ENCODE measurements at regions of chr6 and their contacts with region 1.

Region 1: DNA sequence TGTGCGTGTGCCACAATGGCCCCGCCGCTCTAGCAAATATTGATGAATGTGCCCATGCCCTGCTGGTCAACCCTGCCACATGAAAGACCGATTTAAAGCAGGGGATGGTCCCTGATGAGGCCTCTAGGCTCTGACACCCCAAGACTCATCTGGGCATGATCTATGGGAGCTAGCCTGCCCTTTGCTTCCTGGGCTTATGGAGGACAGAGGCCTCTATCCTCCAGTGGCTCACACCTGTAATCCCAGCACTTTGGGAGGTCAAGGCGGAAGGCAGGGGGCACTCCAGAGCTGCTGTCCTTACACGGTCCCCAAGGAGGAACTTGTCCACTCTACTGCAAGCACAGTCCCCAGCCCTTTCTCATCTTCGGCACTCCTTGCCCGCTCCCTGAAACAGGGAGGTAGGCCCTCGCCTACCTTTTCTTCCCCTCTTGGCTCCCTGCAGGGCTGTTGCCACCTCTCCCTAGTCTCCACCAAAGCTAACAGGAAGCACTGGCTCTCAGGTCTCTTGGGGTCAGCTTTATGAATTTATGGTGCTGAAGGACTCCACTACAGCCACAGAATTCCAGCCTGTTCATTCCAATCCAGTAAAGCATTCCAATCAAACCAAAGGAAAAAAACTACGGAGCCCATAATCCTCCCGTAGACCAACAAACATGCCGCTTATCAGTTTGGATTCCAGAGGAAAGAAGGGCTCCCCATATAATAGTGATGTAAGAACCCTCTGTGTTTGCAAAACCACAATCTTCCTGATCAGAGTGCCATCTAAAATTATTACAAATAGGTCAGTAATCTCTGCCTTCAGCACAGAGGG is 48.7 kb upstream of the FOXQ1 start:
- DNase-seq: peak; percentile 99
- ATAC-seq: peak; percentile 57
- H3K4me3 ChIP-seq: peak overlapping the region; percentile 14 to 53 (median 14); a peak in 5 of 6 replicates
- H3K27ac ChIP-seq: peak overlapping the region; percentile 95
- H3K4me1 ChIP-seq: peaks cover 67% of the 10 kb centered on the region
- H3K27me3 ChIP-seq: no peaks in the 10 kb centered on the region
- CTCF ChIP-seq: peak; percentile 86
- EP300 ChIP-seq: peak in 1 of 2 experiments; percentile 91; a peak in 3 of 4 replicates
- POLR2A ChIP-seq: peak in 1 of 2 experiments; percentile 43; a peak in 2 of 4 replicates
- RAD21 ChIP-seq: peak; percentile 87

Region 2: DNA sequence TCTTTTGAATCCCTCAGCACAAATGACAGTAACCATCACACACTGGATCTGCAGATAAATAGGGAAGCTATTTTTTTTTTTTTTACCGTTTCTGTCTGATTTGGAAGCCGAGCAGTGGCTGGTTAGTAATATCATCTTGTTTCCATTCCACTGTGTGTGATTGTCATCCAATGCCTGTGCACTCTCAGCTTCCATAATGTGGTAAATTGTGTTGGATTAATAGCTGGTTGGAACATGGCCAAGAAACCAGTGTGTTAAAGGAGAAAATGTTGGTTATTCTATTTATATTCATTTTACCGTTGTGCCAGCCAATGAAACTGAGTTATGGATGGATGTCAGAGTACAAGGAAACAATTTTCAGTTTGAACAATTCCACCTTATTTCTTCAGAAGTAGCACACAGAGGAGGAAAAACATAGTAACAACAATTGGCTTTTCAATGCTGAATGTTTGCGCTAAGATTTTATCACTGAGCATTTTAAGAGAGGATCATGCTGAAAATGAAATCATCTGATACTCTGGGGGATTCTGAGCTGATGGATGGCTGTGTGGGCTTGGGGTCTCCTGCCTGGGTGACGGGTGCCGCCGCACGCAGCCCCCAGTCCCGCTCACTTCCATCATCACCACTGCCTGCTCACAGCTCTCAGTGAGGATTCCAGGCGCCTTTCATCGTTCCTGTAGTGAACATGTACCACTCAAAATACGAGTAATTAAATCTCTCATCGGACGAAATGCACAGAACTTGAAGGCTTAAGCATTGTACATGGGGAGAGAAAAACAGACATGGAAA is 529.6 kb before region 1 on chr6:
- CTCF ChIA-PET with region 1: no interaction called
- POLR2A ChIA-PET with region 1: no interaction called
- in situ Hi-C with region 1: no loop called
- intact Hi-C with region 1: no loop called
- DNase-seq: no peak
- ATAC-seq: no peak
- H3K4me3 ChIP-seq: no peak overlapping the region
- H3K27ac ChIP-seq: no peak overlapping the region
- H3K4me1 ChIP-seq: no peaks in the 10 kb centered on the region
- H3K27me3 ChIP-seq: peaks cover 5 to 55% of the 10 kb centered on the region in 2 experiments; a peak in 4 of 5 replicates
- CTCF ChIP-seq: no peak
- EP300 ChIP-seq: no peak
- POLR2A ChIP-seq: no peak
- RAD21 ChIP-seq: no peak

Region 3: DNA sequence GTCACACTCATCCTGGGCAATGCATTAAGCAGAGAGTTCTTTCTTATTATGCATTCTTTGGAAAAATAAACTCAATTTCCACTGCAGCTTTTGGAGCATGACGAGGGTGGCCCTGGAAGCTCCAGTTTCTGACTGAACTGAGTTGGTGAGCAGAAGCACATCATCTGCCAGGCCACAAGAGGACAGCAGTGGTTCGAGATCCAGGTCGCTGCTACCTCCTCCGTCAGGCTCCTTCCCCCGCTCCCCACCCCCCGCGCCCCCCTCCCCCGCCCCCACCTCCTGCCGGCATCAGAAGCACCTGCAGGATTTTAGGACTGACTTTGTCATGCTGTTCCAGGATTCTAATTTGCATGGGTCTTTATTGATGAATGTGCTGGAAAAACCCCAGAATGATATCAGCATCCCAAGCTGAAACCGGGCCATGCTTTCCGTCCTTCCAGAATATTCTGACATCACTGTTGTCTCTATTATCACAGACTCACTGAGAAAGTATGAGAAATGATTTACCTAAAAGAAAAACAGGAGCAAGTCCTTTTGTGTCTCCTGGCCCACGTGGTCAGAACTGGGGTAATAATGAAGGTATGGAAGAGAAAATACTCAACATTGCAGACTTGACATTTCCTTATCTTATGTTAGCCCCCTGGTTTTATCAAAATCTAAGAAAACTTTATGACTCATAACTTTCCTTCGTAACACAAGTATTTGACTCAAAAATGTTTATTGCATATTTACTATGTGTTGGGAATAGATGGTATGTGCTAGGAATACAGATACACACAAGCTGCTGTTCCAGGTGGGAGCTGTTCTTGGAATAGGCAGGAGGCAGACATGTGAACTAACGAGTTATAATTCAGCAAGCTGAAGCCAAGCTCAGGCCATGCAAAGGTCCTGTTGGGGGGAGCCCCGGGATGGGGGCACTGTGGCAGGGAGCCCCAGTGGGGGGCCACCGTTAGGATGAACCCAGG is 350.1 kb before region 1 on chr6:
- CTCF ChIA-PET with region 1: no interaction called
- POLR2A ChIA-PET with region 1: interaction called, 16 read pairs
- in situ Hi-C with region 1: loop called (anchors 5 kb)
- intact Hi-C with region 1: loop called (anchors 1 kb)
- DNase-seq: peak; percentile 56
- ATAC-seq: peak; percentile 91
- H3K4me3 ChIP-seq: no peak overlapping the region
- H3K27ac ChIP-seq: no peak overlapping the region
- H3K4me1 ChIP-seq: peaks cover 16% of the 10 kb centered on the region
- H3K27me3 ChIP-seq: peaks cover 2 to 15% of the 10 kb centered on the region in 2 experiments; a peak in 1 of 5 replicates
- CTCF ChIP-seq: peak; percentile 84
- EP300 ChIP-seq: no peak
- POLR2A ChIP-seq: no peak
- RAD21 ChIP-seq: peak; percentile 85

Region 4: DNA sequence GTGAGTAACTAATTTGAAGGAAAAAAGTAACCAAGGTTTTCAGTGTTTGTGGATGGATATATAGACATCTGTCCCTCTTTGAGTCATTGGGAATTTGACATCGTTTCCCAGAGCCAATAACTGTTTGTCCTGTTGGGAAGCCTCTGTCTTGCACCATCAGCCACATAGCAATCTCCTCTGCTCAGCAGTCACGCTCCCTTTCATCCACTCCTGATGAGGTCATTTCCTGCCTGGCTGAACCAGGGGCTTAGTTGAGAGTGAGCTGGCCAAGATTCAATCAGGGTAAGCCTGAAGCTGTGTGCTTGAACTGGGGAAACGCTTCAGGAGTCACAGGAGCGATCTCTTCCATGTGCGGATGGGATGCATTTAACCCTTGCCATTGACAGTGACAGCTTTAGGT is 72.9 kb before region 1 on chr6:
- CTCF ChIA-PET with region 1: no interaction called
- POLR2A ChIA-PET with region 1: interaction called, 22 read pairs
- in situ Hi-C with region 1: no loop called
- intact Hi-C with region 1: loop called (anchors 2 kb)
- DNase-seq: peak; percentile 79
- ATAC-seq: peak; percentile 28; the same call in 2 of the 3 replicates
- H3K4me3 ChIP-seq: no peak overlapping the region
- H3K27ac ChIP-seq: no peak overlapping the region
- H3K4me1 ChIP-seq: peaks cover 27% of the 10 kb centered on the region
- H3K27me3 ChIP-seq: no peaks in the 10 kb centered on the region
- CTCF ChIP-seq: no peak
- EP300 ChIP-seq: no peak
- POLR2A ChIP-seq: no peak
- RAD21 ChIP-seq: no peak

Region 5: DNA sequence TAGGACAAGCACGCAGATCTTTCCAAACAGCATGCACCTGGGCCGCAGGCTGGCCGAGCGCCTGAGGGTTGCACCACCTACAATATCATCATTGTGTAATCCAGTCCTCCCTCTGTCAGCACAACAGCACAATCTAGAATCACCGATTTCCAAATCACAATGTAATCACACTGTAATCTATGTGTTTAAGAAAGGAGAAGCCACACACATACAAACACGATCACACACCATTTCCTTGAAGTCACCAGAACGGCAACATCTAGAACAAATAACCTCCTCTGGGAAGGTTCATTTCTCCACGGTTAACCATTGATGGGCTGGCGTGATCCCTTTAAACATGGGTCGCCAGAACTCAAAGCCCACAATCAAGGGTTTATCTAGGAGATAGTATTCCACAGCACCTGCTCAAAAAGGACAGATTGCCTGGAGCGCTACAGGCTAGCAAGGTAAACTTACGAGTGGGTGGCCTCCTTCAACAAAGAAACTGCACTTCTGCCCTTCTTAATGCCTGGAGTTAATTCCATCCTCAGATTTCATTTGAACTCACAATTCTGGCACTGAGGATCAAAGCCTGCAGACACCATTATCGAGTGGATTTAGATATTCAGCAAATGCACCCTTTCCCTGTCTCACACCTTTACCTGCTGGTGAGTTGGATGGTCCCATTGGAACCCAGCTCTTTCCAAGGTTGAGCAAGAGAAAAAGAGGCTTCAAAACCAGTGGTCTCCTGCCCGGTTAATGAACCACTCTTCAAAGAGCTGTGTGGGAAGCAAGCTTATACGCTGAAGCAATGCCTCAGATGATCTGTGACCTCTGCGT is 35.1 kb before region 1 on chr6:
- CTCF ChIA-PET with region 1: no interaction called
- POLR2A ChIA-PET with region 1: interaction called, 431 read pairs
- in situ Hi-C with region 1: loop called (anchors 5 kb)
- intact Hi-C with region 1: loop called (anchors 1 kb)
- DNase-seq: peak; percentile 99
- ATAC-seq: peak; percentile 89
- H3K4me3 ChIP-seq: peak overlapping the region; percentile 54 to 68 (median 59)
- H3K27ac ChIP-seq: peak overlapping the region; percentile 96
- H3K4me1 ChIP-seq: peaks cover 97% of the 10 kb centered on the region
- H3K27me3 ChIP-seq: no peaks in the 10 kb centered on the region; a peak in 1 of 5 replicates
- CTCF ChIP-seq: 0 out of 2 replicates have a peak, but pooled peaks have one; percentile 3
- EP300 ChIP-seq: peak; percentile 85 to 98
- POLR2A ChIP-seq: peak; percentile 51 to 66; a peak in 3 of 4 replicates
- RAD21 ChIP-seq: peak; percentile 48

Region 6: GRCh38 chr6:1297746-1298145 is 34.5 kb after region 1 on chr6:
- CTCF ChIA-PET with region 1: no interaction called
- POLR2A ChIA-PET with region 1: interaction called, 35 read pairs
- in situ Hi-C with region 1: no loop called
- intact Hi-C with region 1: no loop called
- DNase-seq: no peak
- ATAC-seq: no peak
- H3K4me3 ChIP-seq: no peak overlapping the region
- H3K27ac ChIP-seq: no peak overlapping the region
- H3K4me1 ChIP-seq: peaks cover 23% of the 10 kb centered on the region
- H3K27me3 ChIP-seq: no peaks in the 10 kb centered on the region
- CTCF ChIP-seq: no peak
- EP300 ChIP-seq: no peak
- POLR2A ChIP-seq: no peak
- RAD21 ChIP-seq: no peak

Region 7: DNA sequence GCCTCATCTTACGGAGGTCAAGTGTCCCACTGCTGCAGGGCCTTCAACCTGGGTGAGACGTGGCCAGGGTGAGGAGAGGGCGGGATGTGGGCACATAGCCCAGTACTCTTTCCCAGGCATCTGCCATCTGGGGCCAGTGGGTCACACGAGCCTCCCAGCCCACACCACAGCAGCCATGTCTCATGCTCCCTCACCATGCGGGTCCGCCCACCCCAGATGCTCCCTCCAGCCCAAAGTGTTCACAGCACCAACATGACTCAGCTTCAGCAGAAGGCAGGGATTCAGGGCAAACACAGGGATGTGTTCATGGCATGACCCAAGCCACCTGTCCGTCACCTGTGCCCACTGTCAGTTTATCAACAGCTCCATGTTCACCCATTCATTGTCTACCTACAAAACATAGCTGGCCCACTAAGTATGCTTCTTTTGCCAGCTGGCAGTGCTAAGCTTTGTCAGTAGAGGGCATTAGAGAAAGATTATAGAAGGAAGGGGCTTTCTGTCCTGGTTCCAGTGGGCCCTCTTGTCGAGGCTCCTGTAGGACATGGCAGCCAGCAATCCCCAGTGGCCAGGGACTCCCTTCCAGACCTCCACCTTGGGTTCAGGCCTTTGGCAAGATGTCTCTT is 235.4 kb after region 1 on chr6:
- CTCF ChIA-PET with region 1: no interaction called
- POLR2A ChIA-PET with region 1: no interaction called
- in situ Hi-C with region 1: no loop called
- intact Hi-C with region 1: no loop called
- DNase-seq: peak; percentile 15
- ATAC-seq: peak; percentile 65
- H3K4me3 ChIP-seq: no peak overlapping the region
- H3K27ac ChIP-seq: no peak overlapping the region
- H3K4me1 ChIP-seq: no peaks in the 10 kb centered on the region
- H3K27me3 ChIP-seq: peaks cover 0 to 65% of the 10 kb centered on the region in 2 experiments; a peak in 4 of 5 replicates
- CTCF ChIP-seq: no peak
- EP300 ChIP-seq: no peak
- POLR2A ChIP-seq: no peak
- RAD21 ChIP-seq: no peak